ENCODE measurements at regions of chr3 and their contacts with region 1.

Region 1: GRCh38 chr3:40317061-40317855 is 7.8 kb downstream of the EIF1B start:
- DNase-seq: peak in 2 of 4 donors; percentile 57 to 72
- ATAC-seq: peak; percentile 85
- H3K4me3 ChIP-seq: no peak overlapping the region
- H3K27ac ChIP-seq: no peak overlapping the region
- H3K4me1 ChIP-seq: peaks cover 0 to 27% of the 10 kb centered on the region in 2 donors
- H3K27me3 ChIP-seq: no peaks in the 10 kb centered on the region
- CTCF ChIP-seq: peak; percentile 82 to 84

Region 2: GRCh38 chr3:40191850-40192448 is 125.3 kb before region 1 on chr3:
- intact Hi-C with region 1: loop called in 1 of 2 experiments (anchors 5 kb)
- DNase-seq: peak in 3 of 4 donors; percentile 33 to 62 (median 57)
- ATAC-seq: peak; percentile 96
- H3K4me3 ChIP-seq: no peak overlapping the region
- H3K27ac ChIP-seq: no peak overlapping the region
- H3K4me1 ChIP-seq: no peaks in the 10 kb centered on the region
- H3K27me3 ChIP-seq: no peaks in the 10 kb centered on the region
- CTCF ChIP-seq: peak; percentile 94 to 96

Region 3: DNA sequence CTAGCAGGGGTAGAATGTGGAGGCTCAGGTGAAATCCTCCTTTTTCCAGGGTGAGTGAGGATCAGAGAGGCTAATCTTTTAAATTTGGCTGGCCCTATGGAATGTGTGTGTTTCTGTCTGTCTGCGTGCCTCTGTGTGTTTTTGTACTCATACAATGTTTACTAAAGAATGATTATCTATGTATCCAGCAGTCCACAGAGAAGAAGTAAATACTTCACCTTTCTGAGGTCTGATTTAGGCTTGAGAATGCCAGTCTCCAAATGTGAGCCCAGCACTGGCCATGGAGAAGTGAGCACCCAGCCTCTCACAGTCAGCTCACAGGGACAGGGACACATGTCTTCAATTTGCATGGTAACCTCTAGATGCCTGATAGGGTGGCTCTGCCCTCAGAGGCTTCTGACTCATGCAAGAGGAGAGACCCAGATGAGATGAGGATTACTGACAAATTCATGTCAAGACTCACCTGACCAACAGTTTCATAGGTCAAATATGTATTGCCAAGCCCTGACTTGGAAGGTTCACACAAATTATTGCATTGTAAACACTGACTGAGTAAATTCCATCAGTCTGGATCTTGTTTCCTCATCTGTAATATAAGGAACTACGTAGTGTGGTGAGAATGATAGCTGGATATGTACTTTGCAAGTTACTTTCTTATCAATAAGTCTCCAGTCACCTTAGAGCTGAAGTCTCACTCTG is 100.7 kb after region 1 on chr3:
- intact Hi-C with region 1: no loop called
- DNase-seq: no peak
- ATAC-seq: no peak
- H3K4me3 ChIP-seq: no peak overlapping the region
- H3K27ac ChIP-seq: no peak overlapping the region
- H3K4me1 ChIP-seq: no peaks in the 10 kb centered on the region
- H3K27me3 ChIP-seq: no peaks in the 10 kb centered on the region
- CTCF ChIP-seq: no peak

Region 4: DNA sequence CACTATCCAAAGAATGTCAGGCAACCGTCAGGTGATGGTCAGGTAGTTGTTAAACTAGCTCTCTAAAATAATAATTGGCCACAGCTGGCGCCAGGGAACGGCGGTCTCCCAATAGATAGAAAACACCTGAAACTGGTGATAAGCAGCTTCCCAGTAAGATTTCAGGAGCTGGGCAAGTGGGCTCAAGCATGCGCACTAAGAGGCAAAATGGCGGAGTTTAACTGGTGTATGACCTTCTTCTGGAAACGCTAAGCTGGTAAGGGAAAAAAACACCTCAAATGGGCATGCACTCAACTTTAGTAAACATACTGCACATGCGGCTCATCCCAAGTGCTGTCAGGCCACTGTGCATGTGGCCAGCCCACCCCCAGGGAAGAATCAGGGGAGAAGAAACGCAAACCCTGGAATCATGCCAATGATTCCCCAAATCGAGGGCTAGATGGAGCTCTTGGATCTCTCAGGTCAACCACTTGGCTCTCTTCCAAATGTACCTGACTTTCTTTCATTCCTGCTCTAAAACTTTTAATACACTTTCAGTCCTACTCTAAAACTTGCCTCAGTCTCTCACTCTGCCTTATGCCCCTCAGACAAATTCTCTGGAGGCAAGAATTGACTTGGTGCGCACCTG is 402.5 kb after region 1 on chr3:
- intact Hi-C with region 1: no loop called
- DNase-seq: peak in 2 of 4 donors; percentile 29 to 59
- ATAC-seq: peak; percentile 52
- H3K4me3 ChIP-seq: no peak overlapping the region
- H3K27ac ChIP-seq: no peak overlapping the region
- H3K4me1 ChIP-seq: no peaks in the 10 kb centered on the region
- H3K27me3 ChIP-seq: no peaks in the 10 kb centered on the region
- CTCF ChIP-seq: no peak